Mammary epithelial cell (primary cell): ENCODE measurements at regions of chr6 and their contacts with region 1.

Region 1: DNA sequence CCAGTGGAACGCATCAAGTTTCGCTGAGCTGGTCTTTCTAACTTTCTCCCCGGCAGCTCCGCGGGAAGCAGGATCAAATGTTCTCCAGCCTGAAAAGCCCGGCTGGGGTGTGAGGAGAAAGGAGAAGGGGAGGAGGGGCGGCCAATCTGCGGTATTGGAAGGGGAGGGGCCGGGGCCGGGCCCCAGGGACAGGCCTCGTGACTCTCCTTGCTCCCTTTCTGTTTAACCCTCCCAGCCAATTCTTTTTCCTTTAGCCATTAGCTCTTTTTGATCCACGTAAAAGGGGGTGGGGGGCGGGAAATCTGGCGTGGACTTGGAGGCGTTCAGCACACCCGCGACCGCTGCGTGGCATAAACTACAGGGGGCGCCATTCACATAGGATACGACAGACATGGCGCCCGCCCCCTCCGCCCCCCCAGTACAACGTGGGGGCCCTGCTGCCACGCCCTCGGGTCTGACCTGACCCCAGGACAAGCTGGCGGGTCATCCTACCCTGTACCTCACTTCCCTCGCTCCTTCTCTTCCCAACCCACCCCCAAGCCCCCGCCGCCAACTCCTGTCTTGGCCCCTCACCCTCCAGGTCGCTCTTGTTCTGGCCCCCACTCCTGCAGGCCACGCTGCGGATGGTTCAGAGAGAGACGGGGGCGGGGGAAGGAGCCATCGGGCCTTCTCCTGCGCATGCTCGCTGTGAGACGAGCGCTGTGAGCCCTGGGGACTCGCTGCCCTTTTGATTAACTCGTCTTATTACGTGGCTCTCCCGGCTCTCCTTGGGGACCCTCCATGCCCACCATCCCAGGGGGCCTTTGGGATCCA is 7.8 kb upstream of the MDGA1 start:
- DNase-seq: peak; percentile 17
- H3K4me3 ChIP-seq: peak overlapping the region; percentile 26 to 33 (median 29)
- H3K27ac ChIP-seq: no peak overlapping the region
- H3K4me1 ChIP-seq: peaks cover 4% of the 10 kb centered on the region
- H3K27me3 ChIP-seq: no peaks in the 10 kb centered on the region
- CTCF ChIP-seq: peak; percentile 26 to 66

Region 2: GRCh38 chr6:37860226-37860839 is 154.9 kb after region 1 on chr6:
- CTCF ChIA-PET with region 1: no interaction called
- dilution Hi-C with region 1: no loop called
- in situ Hi-C with region 1: no loop called
- intact Hi-C with region 1: loop called (anchors 5 kb)
- DNase-seq: no peak
- H3K4me3 ChIP-seq: no peak overlapping the region
- H3K27ac ChIP-seq: no peak overlapping the region
- H3K4me1 ChIP-seq: peaks cover 16% of the 10 kb centered on the region
- H3K27me3 ChIP-seq: no peaks in the 10 kb centered on the region
- CTCF ChIP-seq: peak; percentile 56 to 70

Region 3: DNA sequence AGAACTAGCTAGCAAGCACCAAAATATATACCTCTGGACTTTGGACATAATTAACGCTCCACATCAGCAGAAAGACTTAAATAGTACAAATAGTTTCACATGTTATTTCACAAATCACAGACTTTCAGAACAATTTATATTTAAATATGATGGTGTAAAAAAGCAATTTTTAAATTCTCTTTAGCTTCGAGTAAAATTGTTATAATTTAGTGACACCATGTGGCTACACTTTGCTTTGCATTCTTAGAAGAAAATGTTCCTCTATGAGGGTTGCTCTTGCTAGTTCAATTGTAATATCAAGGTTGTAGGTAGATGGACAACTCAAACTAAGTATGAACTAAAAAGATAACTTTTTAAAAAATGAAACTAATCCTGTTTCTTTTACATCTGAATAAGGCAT is 865.3 kb after region 1 on chr6:
- CTCF ChIA-PET with region 1: no interaction called
- dilution Hi-C with region 1: no loop called
- in situ Hi-C with region 1: no loop called
- intact Hi-C with region 1: loop called (anchors 5 kb)
- DNase-seq: no peak
- H3K4me3 ChIP-seq: no peak overlapping the region
- H3K27ac ChIP-seq: no peak overlapping the region
- H3K4me1 ChIP-seq: no peaks in the 10 kb centered on the region
- H3K27me3 ChIP-seq: no peaks in the 10 kb centered on the region
- CTCF ChIP-seq: peak; percentile 21 to 32